IMR-90 (cell line): ENCODE measurements at regions of chr4 and their contacts with region 1.

Region 1: GRCh38 chr4:151760712-151761527 is at the start of gene GATB:
- DNase-seq: peak; percentile 96
- ATAC-seq: peak; percentile 100
- H3K4me3 ChIP-seq: peak within 1 kb of the TSS; percentile 89
- H3K27ac ChIP-seq: peak within 1 kb of the TSS; percentile 86
- H3K4me1 ChIP-seq: no peaks in the 10 kb centered on the region
- H3K27me3 ChIP-seq: no peaks in the 10 kb centered on the region; the same call in 1 of the 2 replicates
- CTCF ChIP-seq: peak; percentile 49
- POLR2A ChIP-seq: peak; percentile 91
- RAD21 ChIP-seq: peak; percentile 43
- total RNA-seq, gene GATB: 20.3 TPM in 2 replicates

Region 2: DNA sequence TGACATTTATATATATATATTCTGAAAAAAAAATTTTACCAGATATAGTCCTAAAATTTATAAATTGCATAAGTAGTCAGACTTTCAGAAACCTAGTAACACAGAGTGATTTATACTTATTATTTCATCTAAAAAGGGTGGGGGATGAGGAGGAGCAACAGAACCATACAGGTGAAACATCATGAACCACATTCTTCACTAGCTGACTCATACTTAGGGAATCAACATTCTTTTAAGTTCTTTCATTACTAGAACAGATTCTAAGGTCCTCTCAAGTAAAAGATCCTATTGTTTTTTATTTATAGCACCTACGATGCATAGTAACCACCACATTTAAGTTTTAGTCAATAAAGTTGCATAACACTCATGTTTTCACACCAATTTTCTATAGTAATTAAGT is 911.9 kb before region 1 on chr4:
- CTCF ChIA-PET with region 1: no interaction called
- POLR2A ChIA-PET with region 1: no interaction called
- dilution Hi-C with region 1: no loop called
- in situ Hi-C with region 1: no loop called
- intact Hi-C with region 1: loop called (anchors 5 kb)
- DNase-seq: no peak
- ATAC-seq: no peak
- H3K4me3 ChIP-seq: no peak overlapping the region
- H3K27ac ChIP-seq: no peak overlapping the region
- H3K4me1 ChIP-seq: no peaks in the 10 kb centered on the region; the same call in 1 of the 2 replicates
- H3K27me3 ChIP-seq: no peaks in the 10 kb centered on the region
- CTCF ChIP-seq: no peak
- POLR2A ChIP-seq: no peak
- RAD21 ChIP-seq: no peak

Region 3: DNA sequence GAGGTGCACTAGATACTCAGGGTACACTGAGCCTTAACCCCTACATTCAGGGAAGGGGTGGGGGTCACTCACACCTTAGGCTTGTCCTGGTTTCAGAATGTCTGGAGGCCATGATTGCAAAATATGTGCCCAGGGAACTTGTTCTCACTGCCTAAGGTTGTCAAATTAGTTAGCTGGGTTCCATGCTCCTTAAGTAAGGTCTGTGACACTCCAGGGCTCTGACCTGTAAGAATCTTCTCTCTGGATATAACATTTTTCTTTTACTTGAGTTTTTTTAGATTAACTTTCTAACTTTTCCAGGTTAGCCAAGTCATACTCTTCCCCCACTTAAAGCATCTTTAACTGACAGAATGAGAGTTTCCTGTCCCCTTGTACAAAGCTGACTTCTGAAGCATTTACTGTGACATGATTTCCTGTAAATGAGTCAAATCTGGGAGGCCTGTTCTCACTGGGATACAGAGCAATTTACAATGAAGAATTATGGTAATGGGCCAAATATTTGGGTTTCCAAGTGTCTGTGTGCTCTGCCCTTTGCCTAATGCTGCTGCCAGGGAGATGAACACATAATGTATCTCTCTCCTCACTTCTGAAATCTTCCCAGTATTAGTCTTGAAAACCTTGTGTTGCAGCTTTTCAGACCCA is 101.8 kb before region 1 on chr4:
- CTCF ChIA-PET with region 1: no interaction called
- POLR2A ChIA-PET with region 1: no interaction called
- dilution Hi-C with region 1: no loop called
- in situ Hi-C with region 1: no loop called
- intact Hi-C with region 1: no loop called
- DNase-seq: peak; percentile 67
- ATAC-seq: peak; percentile 37
- H3K4me3 ChIP-seq: no peak overlapping the region
- H3K27ac ChIP-seq: no peak overlapping the region
- H3K4me1 ChIP-seq: peaks cover 5% of the 10 kb centered on the region
- H3K27me3 ChIP-seq: peaks cover 2% of the 10 kb centered on the region; the same call in 1 of the 2 replicates
- CTCF ChIP-seq: no peak
- POLR2A ChIP-seq: no peak
- RAD21 ChIP-seq: no peak

Region 4: GRCh38 chr4:151690164-151690870 is 70.6 kb before region 1 on chr4:
- CTCF ChIA-PET with region 1: interaction called, 4 read pairs
- POLR2A ChIA-PET with region 1: no interaction called
- dilution Hi-C with region 1: no loop called
- in situ Hi-C with region 1: no loop called
- intact Hi-C with region 1: loop called (anchors 5 kb)
- DNase-seq: peak; percentile 74
- ATAC-seq: peak; percentile 68
- H3K4me3 ChIP-seq: no peak overlapping the region
- H3K27ac ChIP-seq: peak overlapping the region; percentile 46; the same call in 1 of the 2 replicates
- H3K4me1 ChIP-seq: peaks cover 38% of the 10 kb centered on the region
- H3K27me3 ChIP-seq: no peaks in the 10 kb centered on the region
- CTCF ChIP-seq: no peak
- POLR2A ChIP-seq: no peak
- RAD21 ChIP-seq: no peak

Region 5: DNA sequence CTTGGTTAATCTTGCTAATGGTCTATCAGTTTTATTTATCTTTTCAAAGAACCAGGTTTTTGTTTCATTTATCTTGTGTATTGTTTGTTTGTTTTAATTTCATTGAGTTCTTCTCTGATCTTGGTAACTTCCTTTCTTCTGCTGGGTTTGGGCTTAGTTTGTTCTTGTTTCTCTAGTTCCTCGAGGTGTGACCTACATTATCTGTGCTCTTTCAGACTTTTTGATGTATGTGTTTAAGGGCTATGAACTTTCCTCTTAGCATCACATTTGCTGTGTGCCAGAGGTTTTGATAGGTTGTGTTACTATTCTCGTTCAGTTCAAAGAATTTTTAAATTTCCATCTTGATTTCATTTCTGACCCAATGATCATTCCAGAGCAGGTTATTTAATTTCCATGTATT is 365.3 kb after region 1 on chr4:
- CTCF ChIA-PET with region 1: no interaction called
- POLR2A ChIA-PET with region 1: no interaction called
- dilution Hi-C with region 1: no loop called
- in situ Hi-C with region 1: no loop called
- intact Hi-C with region 1: no loop called
- DNase-seq: no peak
- ATAC-seq: no peak
- H3K4me3 ChIP-seq: no peak overlapping the region
- H3K27ac ChIP-seq: no peak overlapping the region
- H3K4me1 ChIP-seq: no peaks in the 10 kb centered on the region
- H3K27me3 ChIP-seq: no peaks in the 10 kb centered on the region; the same call in 1 of the 2 replicates
- CTCF ChIP-seq: no peak
- POLR2A ChIP-seq: no peak
- RAD21 ChIP-seq: no peak

Region 6: GRCh38 chr4:152369902-152370295 is 609.0 kb after region 1 on chr4:
- CTCF ChIA-PET with region 1: no interaction called
- POLR2A ChIA-PET with region 1: no interaction called
- dilution Hi-C with region 1: no loop called
- in situ Hi-C with region 1: no loop called
- intact Hi-C with region 1: loop called (anchors 5 kb)
- DNase-seq: peak; percentile 24
- ATAC-seq: 0 out of 2 replicates have a peak, but pooled peaks have one; percentile 56
- H3K4me3 ChIP-seq: no peak overlapping the region
- H3K27ac ChIP-seq: no peak overlapping the region
- H3K4me1 ChIP-seq: peaks cover 3% of the 10 kb centered on the region; the same call in 1 of the 2 replicates
- H3K27me3 ChIP-seq: no peaks in the 10 kb centered on the region
- CTCF ChIP-seq: peak; percentile 50
- POLR2A ChIP-seq: no peak
- RAD21 ChIP-seq: peak; percentile 51

Region 7: GRCh38 chr4:152398060-152398459 is 637.1 kb after region 1 on chr4:
- CTCF ChIA-PET with region 1: no interaction called
- POLR2A ChIA-PET with region 1: no interaction called
- dilution Hi-C with region 1: no loop called
- in situ Hi-C with region 1: no loop called
- intact Hi-C with region 1: loop called (anchors 5 kb)
- DNase-seq: peak; percentile 29
- ATAC-seq: peak; percentile 29; the same call in 1 of the 2 replicates
- H3K4me3 ChIP-seq: no peak overlapping the region
- H3K27ac ChIP-seq: no peak overlapping the region
- H3K4me1 ChIP-seq: no peaks in the 10 kb centered on the region
- H3K27me3 ChIP-seq: no peaks in the 10 kb centered on the region
- CTCF ChIP-seq: peak; percentile 45
- POLR2A ChIP-seq: no peak
- RAD21 ChIP-seq: peak; percentile 41